SK-N-SH (cell line): ENCODE measurements at regions of chr5 and their contacts with region 1.

Region 1: DNA sequence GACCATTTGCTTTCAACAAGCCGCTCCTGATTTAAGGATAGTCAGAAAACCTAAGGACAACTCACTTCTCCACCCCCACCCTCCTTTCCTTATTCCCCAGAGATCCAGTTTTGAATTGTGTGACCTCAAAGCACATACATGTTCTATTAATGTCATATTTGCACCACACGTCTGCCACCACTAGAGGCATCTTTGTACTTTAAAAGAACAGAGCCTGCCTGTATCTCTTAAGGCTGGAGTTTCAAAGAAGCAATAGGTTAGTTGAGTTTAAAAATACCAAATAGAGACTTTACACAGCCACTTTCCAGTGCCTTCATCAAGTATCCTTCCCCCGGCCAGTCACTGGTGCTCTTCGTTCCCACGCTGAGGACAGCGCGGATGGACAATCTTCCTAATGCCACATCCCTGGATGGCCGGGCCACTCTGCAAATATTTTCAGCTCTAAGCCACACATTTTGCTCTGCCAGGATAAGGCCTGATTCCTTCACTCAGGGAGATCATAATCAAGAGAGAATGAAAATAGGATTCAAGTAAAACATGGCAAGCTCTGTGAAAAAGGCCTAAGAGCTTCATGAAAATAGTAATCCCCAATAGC is 146.3 kb downstream of the SNCAIP start:
- DNase-seq: peak; percentile 25
- H3K4me3 ChIP-seq: no peak overlapping the region
- H3K27ac ChIP-seq: no peak overlapping the region
- H3K4me1 ChIP-seq: peaks cover 0 to 3% of the 10 kb centered on the region in 2 experiments; a peak in 1 of 4 replicates
- H3K27me3 ChIP-seq: no peaks in the 10 kb centered on the region
- CTCF ChIP-seq: peak; percentile 66
- EP300 ChIP-seq: no peak
- RAD21 ChIP-seq: peak; percentile 71

Region 2: GRCh38 chr5:122434205-122434970 is 24.0 kb before region 1 on chr5:
- CTCF ChIA-PET with region 1: no interaction called
- POLR2A ChIA-PET with region 1: no interaction called
- DNase-seq: no peak
- H3K4me3 ChIP-seq: no peak overlapping the region
- H3K27ac ChIP-seq: no peak overlapping the region
- H3K4me1 ChIP-seq: no peaks in the 10 kb centered on the region
- H3K27me3 ChIP-seq: no peaks in the 10 kb centered on the region
- CTCF ChIP-seq: no peak
- EP300 ChIP-seq: no peak
- RAD21 ChIP-seq: no peak

Region 3: DNA sequence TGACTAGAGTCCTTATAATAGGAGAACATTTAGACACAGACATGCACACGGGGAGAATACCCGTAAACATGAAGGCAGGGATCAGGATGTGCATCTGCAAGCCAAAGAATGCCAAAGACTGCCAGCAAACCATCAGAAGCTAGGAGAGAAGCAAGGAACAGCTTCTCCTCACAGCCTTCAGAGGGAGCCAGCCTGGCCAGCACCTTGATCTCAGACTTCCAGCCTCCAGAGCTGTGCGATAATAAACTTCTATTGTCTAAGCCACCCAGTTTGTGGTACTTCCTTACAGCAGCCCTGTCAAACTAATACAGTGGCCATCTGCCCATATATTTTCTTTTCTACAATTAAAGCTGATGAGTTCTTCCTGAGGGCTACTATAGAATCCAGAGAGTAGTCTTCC is 11.3 kb before region 1 on chr5:
- CTCF ChIA-PET with region 1: interaction called, 19 read pairs
- POLR2A ChIA-PET with region 1: no interaction called
- DNase-seq: no peak
- H3K4me3 ChIP-seq: no peak overlapping the region
- H3K27ac ChIP-seq: no peak overlapping the region
- H3K4me1 ChIP-seq: peaks cover 0 to 2% of the 10 kb centered on the region in 2 experiments; a peak in 1 of 4 replicates
- H3K27me3 ChIP-seq: no peaks in the 10 kb centered on the region
- CTCF ChIP-seq: no peak
- EP300 ChIP-seq: no peak
- RAD21 ChIP-seq: no peak

Region 4: GRCh38 chr5:122468351-122469116 is 10.2 kb after region 1 on chr5:
- CTCF ChIA-PET with region 1: interaction called, 11 read pairs
- POLR2A ChIA-PET with region 1: no interaction called
- DNase-seq: no peak
- H3K4me3 ChIP-seq: no peak overlapping the region
- H3K27ac ChIP-seq: no peak overlapping the region
- H3K4me1 ChIP-seq: peaks cover 0 to 15% of the 10 kb centered on the region in 2 experiments; a peak in 1 of 4 replicates
- H3K27me3 ChIP-seq: peaks cover 5% of the 10 kb centered on the region; the same call in 1 of the 2 replicates
- CTCF ChIP-seq: peak; percentile 19; the same call in 1 of the 2 replicates
- EP300 ChIP-seq: no peak
- RAD21 ChIP-seq: no peak

Region 5: DNA sequence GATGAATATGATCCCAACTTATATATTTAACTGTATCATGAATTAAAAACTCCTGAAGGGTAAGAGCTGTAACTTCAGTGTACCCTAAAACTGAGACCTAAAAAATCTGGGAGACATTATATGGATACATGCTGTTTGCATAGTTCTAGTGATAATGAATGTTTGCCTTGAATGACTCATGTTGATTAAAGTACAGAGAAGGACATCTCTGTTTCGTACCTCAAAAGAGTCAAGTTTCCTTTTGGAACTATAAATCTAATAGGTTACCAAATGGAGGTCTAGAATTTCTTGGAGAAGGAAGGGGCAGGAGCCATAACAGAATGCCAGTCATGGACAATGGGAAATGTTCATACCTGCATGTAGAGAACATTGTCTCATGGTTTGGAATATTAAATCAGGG is 21.8 kb after region 1 on chr5:
- CTCF ChIA-PET with region 1: no interaction called
- POLR2A ChIA-PET with region 1: no interaction called
- DNase-seq: no peak
- H3K4me3 ChIP-seq: no peak overlapping the region
- H3K27ac ChIP-seq: no peak overlapping the region
- H3K4me1 ChIP-seq: no peaks in the 10 kb centered on the region
- H3K27me3 ChIP-seq: no peaks in the 10 kb centered on the region
- CTCF ChIP-seq: no peak
- EP300 ChIP-seq: no peak
- RAD21 ChIP-seq: no peak